Activated naive CD4-positive, alpha-beta T cell treated with anti-CD3 and anti-CD28 coated beads for 36 hours (primary cell): ENCODE measurements at regions of chr12 and their contacts with region 1.

Region 1: GRCh38 chr12:46209914-46210872 is 58.6 kb downstream of the SLC38A1 start:
- DNase-seq: peak; percentile 87
- H3K4me3 Mint-ChIP-seq: peak overlapping the region; percentile 60
- H3K27ac Mint-ChIP-seq: peak overlapping the region; percentile 99
- H3K4me1 Mint-ChIP-seq: peaks cover 84% of the 10 kb centered on the region
- H3K27me3 Mint-ChIP-seq: no peaks in the 10 kb centered on the region

Region 2: DNA sequence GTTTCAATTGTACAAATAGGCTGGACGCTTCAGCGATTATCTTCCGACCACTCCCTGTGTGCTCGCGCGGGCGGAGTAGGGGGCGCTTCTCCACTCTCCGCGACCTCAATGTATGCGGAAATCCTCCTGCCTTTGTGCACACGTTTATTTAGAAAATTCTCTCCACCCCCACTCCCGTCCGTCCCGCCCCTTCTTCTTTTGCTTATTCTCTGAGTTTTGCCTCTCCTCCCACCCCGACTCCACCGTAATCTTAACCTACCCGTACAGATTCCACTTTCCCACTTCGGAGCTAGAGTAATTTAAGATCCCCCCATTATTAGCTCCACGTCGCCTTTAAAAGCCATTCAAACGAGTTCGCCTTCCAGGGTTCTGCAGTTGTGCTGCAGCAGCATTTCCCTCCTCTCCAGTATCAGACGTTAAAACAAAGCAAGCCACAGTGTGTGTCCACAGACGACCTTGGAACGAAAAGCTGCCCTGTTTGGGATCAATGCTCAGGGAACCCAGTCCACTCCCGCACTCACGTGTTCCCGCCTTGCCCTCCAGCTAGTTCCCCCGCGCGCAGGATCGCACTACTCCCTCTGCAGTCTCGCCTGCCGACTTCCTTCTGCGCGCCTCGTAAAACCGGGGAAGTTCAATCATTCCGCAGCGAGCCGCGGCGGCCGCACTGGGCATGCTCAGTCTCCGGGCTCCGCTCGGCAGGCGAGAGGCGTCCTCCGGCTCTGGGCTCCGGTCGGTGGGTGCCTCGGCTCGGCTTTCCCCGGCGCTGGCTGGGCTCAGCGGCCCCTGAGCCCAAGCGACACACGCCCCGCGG is 994.6 kb before region 1 on chr12 and contains the start of gene ANO6:
- CTCF ChIA-PET with region 1: no interaction called
- intact Hi-C with region 1: loop called (anchors 10 kb)
- DNase-seq: peak; percentile 82
- H3K4me3 Mint-ChIP-seq: peak within 1 kb of the TSS; percentile 97
- H3K27ac Mint-ChIP-seq: peak within 1 kb of the TSS; percentile 95
- H3K4me1 Mint-ChIP-seq: peaks cover 36% of the 10 kb centered on the region
- H3K27me3 Mint-ChIP-seq: no peaks in the 10 kb centered on the region
- total RNA-seq, gene ANO6: 12.9 to 14.6 TPM

Region 3: DNA sequence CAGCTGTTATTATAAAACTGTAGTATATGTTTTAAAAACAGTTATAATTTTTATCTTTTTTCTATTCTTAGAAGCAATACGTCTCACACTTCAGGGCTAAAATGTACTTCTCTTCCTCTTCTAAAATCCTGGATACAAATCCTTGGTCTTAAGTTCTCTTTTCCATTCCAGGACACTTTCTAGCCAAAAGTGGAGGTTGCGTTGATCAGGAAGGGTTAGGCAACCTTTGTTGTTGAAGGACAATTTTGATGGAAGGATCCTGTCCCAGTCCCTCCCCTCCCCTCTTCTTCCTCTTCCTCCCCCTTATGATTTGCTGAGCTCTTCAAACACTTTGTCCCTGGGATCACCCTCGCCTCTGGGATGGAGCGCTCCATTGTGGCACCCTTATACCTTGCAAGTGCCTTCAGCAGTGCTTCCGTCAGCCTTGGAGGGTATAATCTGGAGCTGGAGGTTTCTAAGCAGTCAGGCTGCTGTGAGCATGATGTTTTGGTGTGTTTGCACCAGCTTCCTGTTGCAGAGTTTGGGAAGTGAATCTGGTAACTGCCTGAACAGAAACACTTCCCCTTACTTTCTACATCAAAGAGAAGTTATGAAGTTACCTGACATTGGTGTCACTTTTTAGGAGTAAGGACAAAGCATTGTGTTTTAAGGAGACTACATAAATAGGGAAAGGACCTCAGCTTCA is 249.8 kb after region 1 on chr12:
- CTCF ChIA-PET with region 1: no interaction called
- intact Hi-C with region 1: loop called (anchors 2 kb)
- DNase-seq: peak; percentile 48
- H3K4me3 Mint-ChIP-seq: peak overlapping the region; percentile 71
- H3K27ac Mint-ChIP-seq: peak overlapping the region; percentile 91
- H3K4me1 Mint-ChIP-seq: peaks cover 64% of the 10 kb centered on the region
- H3K27me3 Mint-ChIP-seq: no peaks in the 10 kb centered on the region

Region 4: GRCh38 chr12:47216150-47216677 is 1006.0 kb after region 1 on chr12:
- CTCF ChIA-PET with region 1: no interaction called
- intact Hi-C with region 1: loop called (anchors 10 kb)
- DNase-seq: peak; percentile 83
- H3K4me3 Mint-ChIP-seq: peak overlapping the region; percentile 94
- H3K27ac Mint-ChIP-seq: peak overlapping the region; percentile 100
- H3K4me1 Mint-ChIP-seq: peaks cover 12% of the 10 kb centered on the region
- H3K27me3 Mint-ChIP-seq: no peaks in the 10 kb centered on the region

Region 5: GRCh38 chr12:47391566-47391965 is 1181.4 kb after region 1 on chr12:
- CTCF ChIA-PET with region 1: no interaction called
- intact Hi-C with region 1: loop called (anchors 5 kb)
- DNase-seq: peak; percentile 88
- H3K4me3 Mint-ChIP-seq: peak overlapping the region; percentile 77
- H3K27ac Mint-ChIP-seq: peak overlapping the region; percentile 100
- H3K4me1 Mint-ChIP-seq: peaks cover 90% of the 10 kb centered on the region
- H3K27me3 Mint-ChIP-seq: no peaks in the 10 kb centered on the region

Region 6: GRCh38 chr12:47636908-47637780 is 1427.0 kb after region 1 on chr12:
- CTCF ChIA-PET with region 1: no interaction called
- intact Hi-C with region 1: no loop called
- DNase-seq: peak; percentile 68
- H3K4me3 Mint-ChIP-seq: no peak overlapping the region
- H3K27ac Mint-ChIP-seq: no peak overlapping the region
- H3K4me1 Mint-ChIP-seq: peaks cover 2% of the 10 kb centered on the region
- H3K27me3 Mint-ChIP-seq: no peaks in the 10 kb centered on the region